ENCODE measurements at regions of chr14 and their contacts with region 1.

Region 1: GRCh38 chr14:55152052-55152753 is 23.2 kb downstream of the LGALS3 start:
- DNase-seq: no peak
- CTCF ChIP-seq: no peak

Region 2: DNA sequence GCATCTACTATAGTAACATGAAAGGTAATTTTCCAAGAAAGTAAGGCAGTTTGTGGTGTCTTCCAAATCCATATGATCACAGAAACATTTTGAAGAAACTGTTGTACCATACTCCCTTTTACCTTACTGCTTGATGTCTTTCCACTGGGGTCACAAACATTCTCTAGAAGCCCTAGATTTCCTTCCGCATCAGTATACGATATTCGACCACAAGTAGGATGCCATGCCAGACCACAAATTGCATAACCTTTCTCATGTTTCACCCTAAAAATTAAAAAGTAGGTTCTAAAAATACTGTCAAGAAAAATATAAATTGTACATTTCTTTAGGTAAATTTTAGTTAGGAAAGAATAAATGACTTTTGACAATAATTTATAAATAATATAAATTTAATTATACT is 151.8 kb before region 1 on chr14:
- CTCF ChIA-PET with region 1: no interaction called
- POLR2A ChIA-PET with region 1: no interaction called
- DNase-seq: no peak
- CTCF ChIP-seq: no peak

Region 3: DNA sequence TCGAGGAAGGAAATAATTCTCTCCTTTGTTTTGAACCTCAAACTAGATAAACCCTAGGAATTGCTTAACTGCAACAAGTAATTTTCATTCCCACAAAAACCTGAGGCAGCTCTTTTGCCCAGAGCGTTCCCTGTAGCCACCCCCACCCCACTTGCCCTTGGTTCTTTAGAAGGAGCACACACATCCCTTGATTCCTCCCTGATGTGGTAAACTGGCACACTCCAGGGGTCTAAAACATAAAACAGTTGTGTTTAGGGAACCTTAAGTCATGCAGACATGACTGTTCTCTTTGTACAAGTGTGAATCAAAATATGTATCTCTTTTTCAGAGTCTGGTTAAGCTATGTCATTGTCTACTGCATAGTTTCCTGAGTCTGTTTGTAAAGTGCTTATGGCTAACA is 86.8 kb before region 1 on chr14:
- CTCF ChIA-PET with region 1: no interaction called
- POLR2A ChIA-PET with region 1: no interaction called
- DNase-seq: no peak
- CTCF ChIP-seq: no peak

Region 4: DNA sequence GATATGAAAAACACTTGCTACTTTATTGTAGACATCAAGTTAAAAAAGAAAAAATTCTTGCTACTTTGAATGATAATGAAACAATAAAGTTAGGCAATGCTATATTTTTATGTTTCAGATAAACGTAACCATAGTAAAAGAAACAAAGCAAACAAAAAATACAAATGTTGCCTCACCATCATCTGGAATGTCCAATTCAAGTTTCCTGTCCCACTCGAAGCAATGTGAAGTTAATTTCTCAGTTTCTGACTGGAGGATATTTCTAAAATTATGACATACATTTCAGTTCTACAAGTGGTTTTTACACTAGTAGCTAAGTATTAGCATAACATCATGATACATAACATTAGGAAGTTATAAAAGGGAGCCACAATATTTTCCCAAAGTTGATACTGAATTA is 18.3 kb after region 1 on chr14:
- CTCF ChIA-PET with region 1: interaction called, 13 read pairs
- POLR2A ChIA-PET with region 1: no interaction called
- DNase-seq: no peak
- CTCF ChIP-seq: no peak

Region 5: GRCh38 chr14:55238019-55238680 is 85.9 kb after region 1 on chr14:
- CTCF ChIA-PET with region 1: no interaction called
- POLR2A ChIA-PET with region 1: no interaction called
- DNase-seq: no peak
- CTCF ChIP-seq: no peak

Measured in GM10248 (cell line).